ENCODE measurements at regions of chr13 and their contacts with region 1.

Region 1: GRCh38 chr13:94620286-94620896 is 18.7 kb downstream of the GPR180 start:
- DNase-seq: peak; percentile 60
- H3K4me3 Mint-ChIP-seq: no peak overlapping the region
- H3K27ac Mint-ChIP-seq: no peak overlapping the region
- H3K4me1 Mint-ChIP-seq: no peaks in the 10 kb centered on the region
- H3K27me3 Mint-ChIP-seq: no peaks in the 10 kb centered on the region
- CTCF ChIP-seq: peak; percentile 69

Region 2: GRCh38 chr13:94435604-94436226 is 184.7 kb before region 1 on chr13:
- CTCF ChIA-PET with region 1: interaction called, 240 read pairs
- POLR2A ChIA-PET with region 1: interaction called, 6 read pairs
- intact Hi-C with region 1: loop called (anchors 1 kb)
- DNase-seq: peak; percentile 55
- H3K4me3 Mint-ChIP-seq: no peak overlapping the region
- H3K27ac Mint-ChIP-seq: no peak overlapping the region
- H3K4me1 Mint-ChIP-seq: no peaks in the 10 kb centered on the region
- H3K27me3 Mint-ChIP-seq: peaks cover 20% of the 10 kb centered on the region
- CTCF ChIP-seq: peak; percentile 63

Region 3: DNA sequence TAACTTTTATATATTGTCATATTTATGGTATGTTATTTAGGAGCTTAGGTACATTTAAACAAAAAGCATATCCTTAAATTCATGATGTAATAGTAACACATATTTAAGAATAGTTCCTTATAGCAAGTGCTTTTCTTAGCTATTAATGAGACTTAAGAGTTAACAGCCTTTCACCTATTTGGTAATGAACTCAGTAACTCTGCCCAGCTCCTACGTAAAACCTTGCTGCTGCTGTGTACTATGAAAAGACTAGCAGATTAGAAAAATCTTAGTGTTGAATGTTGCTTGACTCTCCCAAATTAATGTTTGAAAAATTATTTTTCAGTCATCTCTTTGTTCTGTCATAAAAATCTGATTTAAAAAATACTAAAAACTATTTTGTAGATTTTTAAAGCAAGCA is 11.8 kb before region 1 on chr13:
- CTCF ChIA-PET with region 1: interaction called, 20 read pairs
- POLR2A ChIA-PET with region 1: interaction called, 3 read pairs
- intact Hi-C with region 1: no loop called
- DNase-seq: no peak
- H3K4me3 Mint-ChIP-seq: no peak overlapping the region
- H3K27ac Mint-ChIP-seq: no peak overlapping the region
- H3K4me1 Mint-ChIP-seq: peaks cover 9% of the 10 kb centered on the region
- H3K27me3 Mint-ChIP-seq: no peaks in the 10 kb centered on the region
- CTCF ChIP-seq: no peak

Region 4: DNA sequence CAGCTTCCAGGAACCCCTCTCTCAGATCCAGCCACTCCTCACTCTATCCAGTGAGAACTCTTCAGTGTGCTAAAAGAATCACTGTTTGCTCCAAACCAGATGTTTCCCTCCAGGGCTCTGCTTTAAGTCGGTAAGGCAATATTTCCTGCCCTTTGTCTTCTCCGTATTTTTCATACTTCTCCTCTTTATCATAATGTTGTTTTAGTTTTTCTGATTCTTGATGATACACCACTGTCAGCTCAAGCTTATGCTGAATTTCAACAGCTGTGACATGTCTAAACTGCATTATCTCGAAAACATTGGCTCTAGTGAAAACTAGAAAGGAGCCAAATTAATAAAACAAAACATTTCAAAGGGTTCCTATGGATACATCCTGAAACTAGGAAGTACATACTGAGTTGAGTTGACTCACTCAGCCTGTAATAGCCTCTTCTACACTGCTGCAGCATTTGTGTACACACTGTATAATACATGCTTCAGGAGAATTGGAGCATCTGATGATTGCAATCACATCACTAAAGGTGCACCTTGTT is 21.1 kb after region 1 on chr13:
- CTCF ChIA-PET with region 1: interaction called, 12 read pairs
- POLR2A ChIA-PET with region 1: interaction called, 4 read pairs
- intact Hi-C with region 1: no loop called
- DNase-seq: peak; percentile 33
- H3K4me3 Mint-ChIP-seq: peak overlapping the region; percentile 45
- H3K27ac Mint-ChIP-seq: peak overlapping the region; percentile 94
- H3K4me1 Mint-ChIP-seq: peaks cover 15% of the 10 kb centered on the region
- H3K27me3 Mint-ChIP-seq: no peaks in the 10 kb centered on the region
- CTCF ChIP-seq: no peak

Region 5: DNA sequence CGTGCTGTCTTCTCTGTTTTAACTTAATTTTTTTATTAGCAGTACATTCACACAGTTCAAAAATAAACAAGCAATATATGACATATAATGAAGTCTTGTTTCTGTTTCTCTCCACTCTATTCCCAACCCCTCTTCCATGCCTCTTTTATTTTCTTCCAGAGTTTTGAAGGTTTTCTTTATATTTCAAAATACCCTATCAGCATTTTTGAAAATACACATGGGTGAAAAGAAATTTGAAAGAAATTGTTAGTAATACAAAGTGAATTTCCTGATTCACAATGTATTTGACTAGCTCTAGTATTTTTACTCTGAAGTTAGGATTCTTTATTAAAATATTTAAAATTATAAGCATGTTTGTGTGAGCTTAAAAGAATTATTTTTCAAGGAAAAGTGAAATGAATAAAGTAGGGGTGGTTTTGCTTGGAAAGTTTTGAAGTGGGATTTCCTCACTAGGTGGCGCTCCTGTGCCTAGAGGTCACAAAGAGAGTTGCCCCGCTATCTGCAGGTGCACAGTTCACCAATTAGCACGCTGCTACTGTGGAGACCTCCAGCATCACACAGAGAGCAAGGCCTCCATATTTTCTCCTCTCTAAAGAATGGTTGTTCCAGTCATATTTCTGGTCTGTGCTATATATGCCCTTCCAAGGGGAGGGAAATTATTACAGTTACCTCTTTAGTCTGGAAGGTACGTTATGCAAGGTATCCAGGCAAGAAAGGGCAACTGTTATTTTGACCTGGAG is 54.4 kb after region 1 on chr13:
- CTCF ChIA-PET with region 1: interaction called, 12 read pairs
- POLR2A ChIA-PET with region 1: no interaction called
- intact Hi-C with region 1: loop called (anchors 1 kb)
- DNase-seq: peak; percentile 69
- H3K4me3 Mint-ChIP-seq: no peak overlapping the region
- H3K27ac Mint-ChIP-seq: no peak overlapping the region
- H3K4me1 Mint-ChIP-seq: no peaks in the 10 kb centered on the region
- H3K27me3 Mint-ChIP-seq: no peaks in the 10 kb centered on the region
- CTCF ChIP-seq: peak; percentile 70

Region 6: DNA sequence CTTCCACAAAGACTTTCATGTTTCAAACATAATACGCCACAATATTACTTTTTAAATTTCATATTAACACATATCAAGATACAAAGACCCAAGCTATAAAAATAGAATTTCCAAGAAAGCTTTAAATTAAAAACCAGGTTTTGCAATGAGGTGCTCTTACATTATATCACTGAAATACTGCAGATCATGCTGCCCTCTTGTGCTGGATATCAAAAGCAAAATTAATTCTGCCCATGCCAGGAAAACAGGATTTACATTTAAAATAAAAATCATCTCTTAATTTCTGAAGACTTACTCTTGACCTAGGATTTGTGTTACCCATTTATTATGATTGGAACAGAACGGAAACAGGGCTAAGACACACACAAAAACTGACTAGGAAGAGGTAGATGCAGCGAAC is 535.8 kb after region 1 on chr13:
- CTCF ChIA-PET with region 1: interaction called, 158 read pairs
- POLR2A ChIA-PET with region 1: interaction called, 5 read pairs
- intact Hi-C with region 1: loop called (anchors 1 kb)
- DNase-seq: peak; percentile 29
- H3K4me3 Mint-ChIP-seq: no peak overlapping the region
- H3K27ac Mint-ChIP-seq: no peak overlapping the region
- H3K4me1 Mint-ChIP-seq: peaks cover 7% of the 10 kb centered on the region
- H3K27me3 Mint-ChIP-seq: no peaks in the 10 kb centered on the region
- CTCF ChIP-seq: peak; percentile 62

Measured in MCF 10A (cell line).